ENCODE measurements at regions of chr11 and their contacts with region 1.

Region 1: DNA sequence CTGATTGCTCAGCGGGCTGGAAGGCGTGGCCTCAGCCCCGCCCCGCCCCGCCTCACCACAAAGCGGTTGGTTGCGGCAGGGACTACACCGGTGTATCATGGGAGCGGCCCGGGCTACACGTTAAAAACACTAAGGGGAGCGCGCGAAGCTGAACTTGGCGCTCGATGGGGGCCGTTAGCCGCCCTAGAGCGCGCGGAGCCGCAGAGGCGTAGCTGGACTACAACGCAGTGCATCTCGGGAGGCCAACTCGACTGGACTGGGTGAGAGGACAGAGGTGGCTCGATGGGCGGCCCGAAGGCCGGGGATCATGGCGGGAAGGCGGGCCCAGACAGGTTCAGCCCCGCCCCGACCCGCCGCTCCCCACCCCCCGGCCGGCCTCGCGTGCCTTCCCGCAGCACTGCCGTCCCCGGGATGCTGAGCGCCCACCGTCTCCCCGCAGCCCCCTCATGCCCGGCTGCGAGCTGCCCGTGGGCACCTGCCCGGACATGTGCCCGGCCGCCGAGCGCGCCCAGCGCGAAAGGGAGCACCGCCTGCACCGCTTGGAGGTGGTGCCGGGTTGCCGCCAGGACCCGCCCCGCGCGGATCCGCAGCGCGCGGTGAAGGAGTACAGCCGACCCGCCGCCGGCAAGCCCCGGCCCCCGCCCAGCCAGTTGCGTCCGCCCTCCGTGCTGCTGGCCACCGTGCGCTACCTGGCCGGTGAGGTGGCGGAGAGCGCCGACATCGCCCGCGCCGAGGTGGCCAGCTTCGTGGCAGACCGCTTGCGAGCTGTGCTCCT is at the start of gene SAC3D1:
- DNase-seq: peak; percentile 96
- ATAC-seq: peak; percentile 95
- H3K4me3 Mint-ChIP-seq: peak within 1 kb of the TSS; percentile 86
- H3K27ac Mint-ChIP-seq: peak within 1 kb of the TSS; percentile 95
- H3K4me1 Mint-ChIP-seq: peaks cover 17% of the 10 kb centered on the region
- H3K27me3 Mint-ChIP-seq: no peaks in the 10 kb centered on the region
- total RNA-seq, gene SAC3D1: 10.5 to 12.1 TPM

Region 2: DNA sequence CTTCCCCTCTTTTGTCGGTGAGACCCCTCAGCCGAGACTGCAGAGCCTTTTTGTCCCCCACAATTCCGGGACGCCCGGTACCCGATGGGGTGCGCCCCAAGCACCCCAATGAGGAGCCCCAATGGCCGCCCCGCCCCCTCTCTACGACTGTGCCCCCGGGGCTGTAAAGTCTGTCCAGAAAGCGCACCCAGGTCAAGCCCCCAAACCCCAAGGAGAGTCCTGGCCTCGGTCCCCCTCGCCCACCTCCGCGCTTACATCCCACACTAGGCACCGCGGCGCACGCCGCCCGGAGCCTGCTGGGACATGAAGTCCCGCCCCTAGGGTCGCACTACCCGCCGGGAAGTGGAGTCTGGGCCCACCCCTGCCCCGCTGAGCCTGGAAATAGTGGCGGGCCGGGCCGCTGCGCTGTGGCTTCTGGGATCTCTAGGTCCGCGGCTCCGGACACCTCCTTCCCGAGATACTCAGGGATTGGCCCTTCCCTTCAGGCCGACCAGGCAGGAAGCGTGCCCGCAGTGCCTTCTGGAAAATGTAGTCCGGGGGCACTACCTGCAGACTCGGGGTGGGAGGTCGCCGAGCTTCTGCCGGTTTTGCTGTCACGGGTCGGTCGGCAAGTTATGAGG is 230.7 kb before region 1 on chr11 and contains the start of gene MEN1:
- CTCF ChIA-PET with region 1: no interaction called
- POLR2A ChIA-PET with region 1: no interaction called
- intact Hi-C with region 1: loop called in 1 of 2 experiments (anchors 1 kb)
- DNase-seq: peak; percentile 92
- ATAC-seq: peak; percentile 95
- H3K4me3 Mint-ChIP-seq: peak within 1 kb of the TSS; percentile 93
- H3K27ac Mint-ChIP-seq: peak within 1 kb of the TSS; percentile 85
- H3K4me1 Mint-ChIP-seq: peaks cover 21% of the 10 kb centered on the region
- H3K27me3 Mint-ChIP-seq: no peaks in the 10 kb centered on the region
- total RNA-seq, gene MEN1: 34.8 to 38.5 TPM

Region 3: GRCh38 chr11:64931286-64931685 is 109.7 kb before region 1 on chr11:
- CTCF ChIA-PET with region 1: no interaction called
- POLR2A ChIA-PET with region 1: no interaction called
- intact Hi-C with region 1: no loop called
- DNase-seq: no peak
- ATAC-seq: no peak
- H3K4me3 Mint-ChIP-seq: no peak overlapping the region
- H3K27ac Mint-ChIP-seq: no peak overlapping the region
- H3K4me1 Mint-ChIP-seq: no peaks in the 10 kb centered on the region
- H3K27me3 Mint-ChIP-seq: no peaks in the 10 kb centered on the region

Region 4: GRCh38 chr11:64971421-64972233 is 69.4 kb before region 1 on chr11 and contains the start of gene MAJIN:
- CTCF ChIA-PET with region 1: no interaction called
- POLR2A ChIA-PET with region 1: no interaction called
- intact Hi-C with region 1: loop called in 1 of 2 experiments (anchors 2 kb)
- DNase-seq: peak; percentile 96
- ATAC-seq: peak; percentile 48
- H3K4me3 Mint-ChIP-seq: peak within 1 kb of the TSS; percentile 63
- H3K27ac Mint-ChIP-seq: peak within 1 kb of the TSS; percentile 94
- H3K4me1 Mint-ChIP-seq: peaks cover 42% of the 10 kb centered on the region
- H3K27me3 Mint-ChIP-seq: no peaks in the 10 kb centered on the region
- total RNA-seq, gene MAJIN: 1.2 to 1.6 TPM

Region 5: DNA sequence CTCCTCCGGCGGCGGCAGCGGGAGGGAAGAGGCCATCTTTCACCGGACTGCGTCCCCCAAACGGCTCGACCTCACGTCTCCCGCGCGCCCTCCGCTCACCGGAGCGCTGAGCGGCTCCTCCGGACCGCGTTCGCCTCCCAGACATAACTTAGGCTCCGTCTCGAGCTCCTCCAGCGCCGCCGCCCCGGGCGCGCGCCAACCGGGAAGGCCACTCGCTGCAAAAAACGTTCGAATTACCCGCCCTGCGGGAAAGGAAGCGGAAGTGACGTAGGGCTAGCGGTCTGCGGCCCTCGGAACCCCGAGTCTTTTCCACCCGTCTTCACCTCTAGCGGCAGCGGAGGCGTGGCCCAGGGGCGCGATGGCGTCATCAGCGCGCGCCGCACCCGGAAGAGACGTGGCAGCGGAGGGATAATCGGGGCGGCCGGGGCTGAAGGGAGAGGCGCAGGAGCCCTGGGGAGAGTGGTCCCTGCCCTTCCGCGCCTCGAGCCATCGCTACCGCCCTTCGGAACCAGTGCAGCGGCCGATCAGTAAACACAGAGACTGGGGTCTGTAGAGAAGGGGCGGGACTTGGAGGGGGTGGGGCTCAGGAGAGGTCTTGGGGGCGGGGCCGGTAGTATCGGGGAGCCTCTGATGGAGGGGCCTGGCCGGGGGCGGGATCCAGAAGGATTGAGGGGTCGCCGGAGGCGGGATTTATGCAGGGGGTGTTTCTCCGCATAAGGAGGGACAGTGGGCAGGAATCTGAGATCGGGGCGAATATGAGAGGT is 43.0 kb after region 1 on chr11 and contains the starts of genes CDCA5 and ZFPL1:
- CTCF ChIA-PET with region 1: interaction called, 3 read pairs
- POLR2A ChIA-PET with region 1: no interaction called
- intact Hi-C with region 1: loop called (anchors 1 to 5 kb)
- DNase-seq: peak; percentile 97
- ATAC-seq: peak; percentile 81
- H3K4me3 Mint-ChIP-seq: peak within 1 kb of the TSS; percentile 99
- H3K27ac Mint-ChIP-seq: peak within 1 kb of the TSS; percentile 98
- H3K4me1 Mint-ChIP-seq: peaks cover 41% of the 10 kb centered on the region
- H3K27me3 Mint-ChIP-seq: no peaks in the 10 kb centered on the region
- total RNA-seq, gene CDCA5: 111 to 119 TPM
- total RNA-seq, gene ZFPL1: 24.2 to 31.8 TPM

Region 6: DNA sequence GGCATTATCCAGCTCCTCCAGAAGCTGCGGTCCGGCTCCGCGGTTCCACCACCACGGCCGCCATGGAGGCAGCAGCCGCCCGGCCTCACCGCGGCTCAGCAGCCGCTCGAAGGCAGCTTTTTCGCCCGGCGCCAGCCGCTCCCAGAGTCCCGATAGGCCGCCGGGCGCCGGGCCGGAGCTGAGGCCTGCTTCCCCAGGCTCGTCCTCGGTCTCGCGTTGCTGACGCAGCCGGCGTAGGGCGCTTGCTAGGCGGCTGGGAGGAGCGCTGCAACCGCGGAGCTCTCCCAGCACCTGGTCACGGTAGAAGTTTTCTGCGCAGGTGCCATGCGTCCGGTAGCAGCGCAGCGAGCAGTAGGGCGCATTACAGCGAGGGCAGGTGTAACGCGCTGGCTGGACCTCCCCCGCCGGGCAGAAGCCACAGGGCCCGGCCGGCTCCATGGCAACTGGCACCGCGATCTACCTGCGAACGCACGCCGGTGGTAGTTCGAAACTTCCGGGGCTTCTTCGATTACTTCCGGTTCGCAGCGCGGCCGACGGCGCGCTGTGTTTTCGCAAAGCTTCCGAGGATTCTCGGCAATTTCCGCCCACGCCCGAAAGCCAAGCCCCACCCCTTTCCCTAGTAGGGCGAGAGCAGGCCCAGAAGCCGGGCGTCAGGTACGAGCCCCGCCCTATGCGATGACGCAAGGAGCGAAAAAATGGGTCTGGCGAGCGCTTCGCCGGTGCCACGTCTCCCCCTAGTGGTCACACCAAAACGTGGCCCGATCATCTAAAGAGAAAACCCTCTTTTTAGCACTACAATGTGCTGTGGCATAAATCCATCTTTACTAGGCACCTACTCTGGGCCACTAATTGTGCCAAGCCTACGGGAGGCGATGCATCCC is 76.4 kb after region 1 on chr11 and contains the start of gene ZNHIT2:
- CTCF ChIA-PET with region 1: no interaction called
- POLR2A ChIA-PET with region 1: no interaction called
- intact Hi-C with region 1: loop called (anchors 1 to 2 kb)
- DNase-seq: peak; percentile 100
- ATAC-seq: peak; percentile 68
- H3K4me3 Mint-ChIP-seq: peak within 1 kb of the TSS; percentile 88
- H3K27ac Mint-ChIP-seq: peak within 1 kb of the TSS; percentile 95
- H3K4me1 Mint-ChIP-seq: peaks cover 57% of the 10 kb centered on the region
- H3K27me3 Mint-ChIP-seq: no peaks in the 10 kb centered on the region
- total RNA-seq, gene ZNHIT2: 7.1 to 9.7 TPM

Region 7: DNA sequence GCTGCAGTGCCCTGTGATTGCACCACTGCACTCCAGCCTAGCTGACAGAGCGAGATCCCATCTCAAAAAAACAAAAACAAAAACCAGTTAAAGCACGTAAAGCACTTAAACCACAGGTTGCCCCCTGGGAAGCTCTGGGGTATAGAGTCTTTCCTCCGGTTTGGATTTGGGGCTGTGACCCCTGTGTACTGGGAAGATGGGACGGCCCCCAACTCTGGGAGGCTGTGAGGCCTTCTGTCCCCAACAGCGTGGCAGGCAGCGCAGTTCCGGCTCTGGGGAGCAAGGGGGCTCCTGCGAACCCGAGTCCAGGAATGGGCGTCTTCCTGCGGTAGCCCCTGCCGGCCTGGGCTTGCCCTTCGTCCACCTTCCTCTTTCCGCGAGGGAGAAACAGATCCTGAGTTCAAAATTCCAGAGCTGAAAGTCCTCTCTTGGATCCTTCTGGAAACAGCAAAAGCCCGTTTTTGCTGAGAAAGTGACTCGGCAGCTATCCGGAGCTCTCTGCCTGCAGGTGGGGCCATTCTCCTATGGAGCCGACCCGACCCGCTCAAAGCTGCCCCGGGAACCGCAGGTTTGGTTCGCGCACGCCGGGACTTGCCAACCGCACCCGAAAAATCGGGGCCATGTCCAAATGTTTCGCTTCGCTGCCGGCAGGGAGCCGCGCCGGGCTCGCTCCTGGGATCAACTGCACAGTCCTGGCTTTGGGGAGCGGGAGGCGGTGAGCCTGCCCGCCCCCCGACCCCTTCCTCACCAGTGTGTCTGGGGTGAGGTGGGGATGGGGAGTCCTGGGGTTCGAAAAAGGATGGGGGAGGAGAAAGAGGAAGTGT is 184.5 kb after region 1 on chr11:
- CTCF ChIA-PET with region 1: no interaction called
- POLR2A ChIA-PET with region 1: no interaction called
- intact Hi-C with region 1: no loop called
- DNase-seq: peak; percentile 81
- ATAC-seq: peak; percentile 88
- H3K4me3 Mint-ChIP-seq: peak overlapping the region; percentile 71
- H3K27ac Mint-ChIP-seq: no peak overlapping the region
- H3K4me1 Mint-ChIP-seq: peaks cover 15% of the 10 kb centered on the region
- H3K27me3 Mint-ChIP-seq: peaks cover 21% of the 10 kb centered on the region

Region 8: DNA sequence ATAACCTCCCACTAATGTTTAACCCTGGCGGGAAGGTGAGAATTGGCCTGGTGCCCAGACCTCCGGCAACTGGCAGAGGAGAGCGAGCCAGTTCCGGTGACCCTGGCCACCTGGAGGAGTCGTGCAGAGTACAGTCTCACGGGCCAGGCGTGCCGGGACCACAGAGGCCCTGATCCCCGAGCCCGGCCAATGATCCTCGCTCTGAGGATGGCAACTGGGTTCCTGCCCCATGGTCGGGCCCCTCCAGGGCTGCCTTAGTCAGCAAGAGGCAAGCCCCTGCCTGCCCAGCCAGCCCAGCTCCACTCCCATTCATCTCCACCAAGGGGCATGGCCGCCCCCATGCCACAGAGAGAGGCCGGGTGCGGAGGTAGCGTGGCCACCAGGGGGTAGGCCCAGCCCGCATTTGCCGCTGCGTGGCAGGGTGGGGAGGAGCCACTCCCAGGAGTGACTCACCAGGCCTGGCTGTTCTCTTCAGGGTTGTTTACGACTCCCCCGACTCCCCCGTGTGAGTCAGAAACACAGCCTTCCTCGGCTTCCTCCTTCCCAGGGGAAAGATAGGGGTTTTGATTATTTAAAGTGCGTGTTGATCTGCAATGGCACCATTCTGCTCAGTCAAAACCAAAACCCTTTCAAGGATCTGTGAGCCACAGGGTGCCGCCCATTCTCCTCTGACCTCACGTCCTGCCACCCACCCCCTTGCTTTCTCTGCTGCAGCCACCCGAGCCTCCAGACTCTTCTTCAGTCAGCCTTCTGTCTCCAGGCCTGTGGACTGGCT is 341.2 kb after region 1 on chr11 and contains the start of gene SLC25A45:
- CTCF ChIA-PET with region 1: no interaction called
- POLR2A ChIA-PET with region 1: no interaction called
- intact Hi-C with region 1: loop called in 1 of 2 experiments (anchors 1 kb)
- DNase-seq: peak; percentile 97
- ATAC-seq: peak; percentile 84
- H3K4me3 Mint-ChIP-seq: peak within 1 kb of the TSS; percentile 78
- H3K27ac Mint-ChIP-seq: peak within 1 kb of the TSS; percentile 97
- H3K4me1 Mint-ChIP-seq: peaks cover 37% of the 10 kb centered on the region
- H3K27me3 Mint-ChIP-seq: no peaks in the 10 kb centered on the region
- total RNA-seq, gene SLC25A45: 13.2 to 14.3 TPM